Activated B cell treated with CpG ODN at 0.5 μM for 24 hours (primary cell): ENCODE measurements at regions of chr20 and their contacts with region 1.

Region 1: DNA sequence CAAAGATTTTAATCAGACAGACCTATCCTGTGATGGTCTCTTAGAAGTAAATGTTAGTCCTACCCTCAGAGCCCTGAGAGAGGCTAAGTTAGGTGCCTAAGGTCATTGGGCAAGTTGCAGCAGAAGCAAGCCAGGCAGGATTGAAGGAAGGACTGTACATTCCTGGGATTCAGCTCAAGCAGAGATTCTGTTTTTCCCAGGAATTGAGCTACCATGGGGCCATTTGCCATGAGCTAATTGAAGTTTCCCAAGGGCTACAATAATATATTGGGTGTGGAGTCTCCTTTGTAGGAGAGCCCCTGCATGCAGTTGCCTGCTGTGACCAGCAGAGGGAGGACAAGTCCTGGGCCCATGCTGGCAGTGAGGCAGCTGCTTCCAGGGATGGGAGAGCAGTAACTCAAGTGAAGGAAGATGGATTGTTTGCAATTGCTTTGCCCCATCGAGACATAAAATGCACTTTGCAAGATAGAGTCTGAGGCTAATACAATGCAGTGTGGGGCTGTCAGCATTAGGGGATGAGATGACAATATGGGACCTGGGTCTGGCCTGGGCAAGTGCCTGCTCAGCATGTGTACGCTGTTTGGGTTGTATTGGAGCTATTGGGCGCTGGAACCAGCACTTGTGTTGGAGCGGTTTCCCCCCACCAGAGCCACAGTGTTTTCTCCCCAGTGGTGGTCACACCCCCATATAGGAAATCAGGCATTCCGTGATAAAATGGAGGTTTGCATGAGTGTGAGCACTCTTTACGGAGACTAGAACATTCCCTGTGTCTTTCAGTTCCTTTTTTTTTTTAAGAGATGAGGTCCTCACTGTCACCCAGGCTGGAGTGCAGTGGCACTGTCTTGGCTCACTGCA is 27.9 kb downstream of the DNMT3B start:
- DNase-seq: peak; percentile 46
- ATAC-seq: peak; percentile 57
- H3K4me3 Mint-ChIP-seq: no peak overlapping the region
- H3K27ac Mint-ChIP-seq: no peak overlapping the region
- H3K4me1 Mint-ChIP-seq: peaks cover 37% of the 10 kb centered on the region
- H3K27me3 Mint-ChIP-seq: no peaks in the 10 kb centered on the region
- CTCF ChIP-seq: peak; percentile 45

Region 2: DNA sequence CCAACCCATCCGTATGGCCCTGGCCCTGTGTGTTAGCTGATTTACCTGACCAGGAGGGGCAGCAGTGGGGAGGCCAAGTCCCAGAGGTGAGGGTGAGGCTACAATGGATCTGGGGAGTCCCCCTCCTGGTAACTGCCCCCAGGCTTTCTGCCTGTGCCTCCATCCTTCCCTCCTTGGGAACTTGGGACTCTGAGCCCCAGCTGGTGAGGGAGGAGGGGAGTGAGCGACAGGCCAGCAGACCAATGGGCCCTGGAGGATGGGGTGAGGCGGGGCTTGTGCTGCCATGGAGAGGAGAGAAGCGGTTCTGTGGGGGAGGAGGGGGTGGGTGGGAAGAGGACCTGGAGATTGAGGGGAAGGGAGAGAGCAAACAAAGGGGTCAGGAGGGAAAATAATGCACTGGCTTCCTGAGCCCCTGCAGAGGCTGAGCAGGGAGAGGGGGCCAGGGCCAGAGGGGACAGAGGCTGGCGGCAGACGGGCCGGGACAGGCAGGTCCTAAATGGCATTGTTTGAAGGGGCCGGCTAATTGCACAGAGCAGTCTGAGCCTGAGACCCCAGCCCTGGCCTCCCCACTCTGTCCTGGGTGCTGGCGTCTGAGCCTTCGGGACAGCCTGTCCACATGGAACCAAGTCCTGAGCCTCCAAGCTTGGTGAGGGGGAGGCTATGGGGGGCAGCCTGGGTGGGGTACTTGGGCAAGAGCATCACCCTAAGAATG is 10.5 kb before region 1 on chr20:
- CTCF ChIA-PET with region 1: interaction called, 13 read pairs
- POLR2A ChIA-PET with region 1: no interaction called
- intact Hi-C with region 1: no loop called
- DNase-seq: no peak
- ATAC-seq: no peak
- H3K4me3 Mint-ChIP-seq: no peak overlapping the region
- H3K27ac Mint-ChIP-seq: no peak overlapping the region
- H3K4me1 Mint-ChIP-seq: peaks cover 4% of the 10 kb centered on the region
- H3K27me3 Mint-ChIP-seq: no peaks in the 10 kb centered on the region
- CTCF ChIP-seq: no peak

Region 3: DNA sequence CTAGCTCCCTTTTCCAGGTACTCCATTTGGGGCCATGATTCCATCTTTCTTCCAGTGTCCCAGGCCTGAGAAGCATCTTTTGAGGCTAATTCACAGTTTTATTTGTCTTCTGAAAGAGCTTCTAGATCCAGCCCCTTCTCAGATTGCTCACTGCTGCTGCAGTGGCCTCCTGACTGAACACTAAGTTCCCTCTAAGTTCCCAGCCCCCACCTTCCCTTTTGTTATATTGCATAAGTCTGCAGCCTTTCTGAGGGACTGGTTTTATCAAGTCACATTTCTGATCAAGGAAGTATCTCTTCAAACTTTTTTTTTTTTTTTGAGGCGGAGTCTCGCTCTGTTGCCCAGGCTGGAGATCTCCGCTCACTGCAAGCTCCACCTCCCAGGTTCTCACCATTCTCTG is 40.3 kb after region 1 on chr20:
- CTCF ChIA-PET with region 1: interaction called, 3 read pairs
- POLR2A ChIA-PET with region 1: no interaction called
- intact Hi-C with region 1: loop called (anchors 5 kb)
- DNase-seq: no peak
- ATAC-seq: no peak
- H3K4me3 Mint-ChIP-seq: no peak overlapping the region
- H3K27ac Mint-ChIP-seq: no peak overlapping the region
- H3K4me1 Mint-ChIP-seq: peaks cover 9% of the 10 kb centered on the region
- H3K27me3 Mint-ChIP-seq: no peaks in the 10 kb centered on the region
- CTCF ChIP-seq: no peak

Region 4: GRCh38 chr20:32858701-32859372 is 68.7 kb after region 1 on chr20 and contains the start of gene EFCAB8:
- CTCF ChIA-PET with region 1: no interaction called
- POLR2A ChIA-PET with region 1: no interaction called
- intact Hi-C with region 1: no loop called
- DNase-seq: no peak
- ATAC-seq: no peak
- H3K4me3 Mint-ChIP-seq: no peak within 1 kb of the TSS
- H3K27ac Mint-ChIP-seq: no peak within 1 kb of the TSS
- H3K4me1 Mint-ChIP-seq: no peaks in the 10 kb centered on the region
- H3K27me3 Mint-ChIP-seq: no peaks in the 10 kb centered on the region
- CTCF ChIP-seq: no peak
- total RNA-seq, gene EFCAB8: 0.71 TPM in 2 replicates

Region 5: GRCh38 chr20:33097001-33097400 is 306.9 kb after region 1 on chr20:
- CTCF ChIA-PET with region 1: interaction called, 3 read pairs
- POLR2A ChIA-PET with region 1: no interaction called
- intact Hi-C with region 1: loop called (anchors 1 kb)
- DNase-seq: no peak
- ATAC-seq: no peak
- H3K4me3 Mint-ChIP-seq: no peak overlapping the region
- H3K27ac Mint-ChIP-seq: no peak overlapping the region
- H3K4me1 Mint-ChIP-seq: no peaks in the 10 kb centered on the region
- H3K27me3 Mint-ChIP-seq: peaks cover 3% of the 10 kb centered on the region
- CTCF ChIP-seq: no peak

Region 6: GRCh38 chr20:33299111-33299603 is 509.0 kb after region 1 on chr20:
- CTCF ChIA-PET with region 1: interaction called, 3 read pairs
- POLR2A ChIA-PET with region 1: no interaction called
- intact Hi-C with region 1: loop called (anchors 1 kb)
- DNase-seq: peak; percentile 69
- ATAC-seq: peak; percentile 75
- H3K4me3 Mint-ChIP-seq: no peak overlapping the region
- H3K27ac Mint-ChIP-seq: no peak overlapping the region
- H3K4me1 Mint-ChIP-seq: no peaks in the 10 kb centered on the region
- H3K27me3 Mint-ChIP-seq: peaks cover 13% of the 10 kb centered on the region
- CTCF ChIP-seq: peak; percentile 95